ENCODE measurements at regions of chr2 and their contacts with region 1.

Region 1: GRCh38 chr2:37877457-37878315 is 47.4 kb upstream of the RMDN2 start:
- DNase-seq: peak; percentile 72
- H3K4me3 ChIP-seq: no peak overlapping the region
- H3K27ac ChIP-seq: no peak overlapping the region
- H3K4me1 ChIP-seq: no peaks in the 10 kb centered on the region
- CTCF ChIP-seq: peak; percentile 96

Region 2: DNA sequence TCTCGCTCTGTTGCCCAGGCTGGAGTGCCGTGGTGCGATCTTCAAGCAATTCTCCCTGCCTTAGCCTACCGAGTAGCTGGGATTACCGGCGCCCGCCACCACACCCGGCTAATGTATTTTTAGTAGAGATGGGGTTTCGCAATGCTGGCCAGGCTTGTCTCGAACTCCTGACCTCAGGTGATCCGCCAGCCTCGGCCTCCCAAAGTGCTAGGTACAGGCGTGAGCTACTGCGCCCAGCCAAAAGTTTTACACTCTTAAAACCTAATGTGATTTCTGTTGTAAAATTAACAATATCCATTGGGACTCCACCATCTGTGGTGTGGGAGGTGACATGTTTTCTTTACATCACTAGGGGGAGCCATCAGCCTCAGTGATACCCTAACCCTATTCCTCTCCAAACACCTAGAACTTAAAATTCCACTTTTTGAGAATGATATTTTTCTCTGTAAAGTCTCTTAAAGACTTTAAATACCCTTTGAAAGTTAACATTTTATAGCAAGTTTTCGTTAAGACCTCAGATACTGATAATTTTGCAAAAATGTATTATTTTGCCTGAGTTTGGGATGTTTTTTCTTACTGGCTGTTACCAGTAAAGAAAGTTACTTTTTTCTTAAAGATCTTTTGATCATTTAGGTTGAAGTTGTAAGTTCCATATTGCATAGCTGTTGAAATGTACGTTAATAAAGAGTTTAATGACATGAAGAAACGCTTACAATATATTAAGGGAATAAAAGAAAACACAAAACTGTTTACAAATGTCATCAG is 709.3 kb before region 1 on chr2:
- CTCF ChIA-PET with region 1: no interaction called
- POLR2A ChIA-PET with region 1: no interaction called
- intact Hi-C with region 1: loop called (anchors 5 kb)
- DNase-seq: peak; percentile 60
- H3K4me3 ChIP-seq: no peak overlapping the region
- H3K27ac ChIP-seq: no peak overlapping the region
- H3K4me1 ChIP-seq: no peaks in the 10 kb centered on the region
- CTCF ChIP-seq: peak; percentile 94

Region 3: GRCh38 chr2:37397166-37397565 is 480.5 kb before region 1 on chr2:
- CTCF ChIA-PET with region 1: interaction called, 12 read pairs
- POLR2A ChIA-PET with region 1: interaction called, 3 read pairs
- intact Hi-C with region 1: loop called (anchors 2 kb)
- DNase-seq: no peak
- H3K4me3 ChIP-seq: no peak overlapping the region
- H3K27ac ChIP-seq: no peak overlapping the region
- H3K4me1 ChIP-seq: peaks cover 41% of the 10 kb centered on the region
- CTCF ChIP-seq: no peak

Region 4: GRCh38 chr2:37549598-37549997 is 328.1 kb before region 1 on chr2:
- CTCF ChIA-PET with region 1: no interaction called
- POLR2A ChIA-PET with region 1: no interaction called
- intact Hi-C with region 1: loop called (anchors 2 kb)
- DNase-seq: no peak
- H3K4me3 ChIP-seq: no peak overlapping the region
- H3K27ac ChIP-seq: no peak overlapping the region
- H3K4me1 ChIP-seq: peaks cover 13% of the 10 kb centered on the region
- CTCF ChIP-seq: no peak